Endothelial cell of umbilical vein (primary cell): ENCODE measurements at regions of chr13 and their contacts with region 1.

Region 1: GRCh38 chr13:107450931-107451330 is 764.4 kb downstream of the LIG4 start:
- DNase-seq: peak; percentile 99
- H3K4me3 ChIP-seq: no peak overlapping the region
- H3K27ac ChIP-seq: peak overlapping the region; percentile 99
- H3K4me1 ChIP-seq: peaks cover 23% of the 10 kb centered on the region
- H3K27me3 ChIP-seq: no peaks in the 10 kb centered on the region
- CTCF ChIP-seq: peak in 1 of 2 donors; percentile 12
- POLR2A ChIP-seq: peak; percentile 74

Region 2: GRCh38 chr13:106567474-106568298 is 883.2 kb before region 1 on chr13 and contains the start of gene ARGLU1:
- CTCF ChIA-PET with region 1: no interaction called
- POLR2A ChIA-PET with region 1: no interaction called
- dilution Hi-C with region 1: no loop called
- intact Hi-C with region 1: loop called (anchors 10 kb)
- DNase-seq: peak; percentile 96
- H3K4me3 ChIP-seq: peak within 1 kb of the TSS; percentile 57 to 98 (median 79)
- H3K27ac ChIP-seq: peak within 1 kb of the TSS; percentile 85
- H3K4me1 ChIP-seq: peaks cover 26% of the 10 kb centered on the region
- H3K27me3 ChIP-seq: no peaks in the 10 kb centered on the region
- CTCF ChIP-seq: no peak
- POLR2A ChIP-seq: peak; percentile 92
- total RNA-seq, gene ARGLU1: 95.7 and 111 TPM in 2 replicates

Region 3: GRCh38 chr13:107271227-107271626 is 179.7 kb before region 1 on chr13:
- CTCF ChIA-PET with region 1: no interaction called
- POLR2A ChIA-PET with region 1: no interaction called
- dilution Hi-C with region 1: no loop called
- intact Hi-C with region 1: loop called (anchors 2 kb)
- DNase-seq: peak; percentile 90
- H3K4me3 ChIP-seq: no peak overlapping the region
- H3K27ac ChIP-seq: peak overlapping the region; percentile 39
- H3K4me1 ChIP-seq: peaks cover 14% of the 10 kb centered on the region
- H3K27me3 ChIP-seq: no peaks in the 10 kb centered on the region
- CTCF ChIP-seq: no peak
- POLR2A ChIP-seq: no peak

Region 4: GRCh38 chr13:107407074-107407473 is 43.9 kb before region 1 on chr13:
- CTCF ChIA-PET with region 1: no interaction called
- POLR2A ChIA-PET with region 1: no interaction called
- dilution Hi-C with region 1: no loop called
- intact Hi-C with region 1: loop called (anchors 1 kb)
- DNase-seq: peak; percentile 74
- H3K4me3 ChIP-seq: no peak overlapping the region
- H3K27ac ChIP-seq: peak overlapping the region; percentile 65
- H3K4me1 ChIP-seq: peaks cover 12% of the 10 kb centered on the region
- H3K27me3 ChIP-seq: no peaks in the 10 kb centered on the region
- CTCF ChIP-seq: no peak
- POLR2A ChIP-seq: no peak

Region 5: GRCh38 chr13:107585469-107586180 is 134.7 kb after region 1 on chr13:
- CTCF ChIA-PET with region 1: no interaction called
- POLR2A ChIA-PET with region 1: no interaction called
- dilution Hi-C with region 1: no loop called
- intact Hi-C with region 1: loop called (anchors 1 kb)
- DNase-seq: peak; percentile 78
- H3K4me3 ChIP-seq: no peak overlapping the region
- H3K27ac ChIP-seq: no peak overlapping the region
- H3K4me1 ChIP-seq: peaks cover 13% of the 10 kb centered on the region
- H3K27me3 ChIP-seq: no peaks in the 10 kb centered on the region
- CTCF ChIP-seq: no peak
- POLR2A ChIP-seq: no peak

Region 6: DNA sequence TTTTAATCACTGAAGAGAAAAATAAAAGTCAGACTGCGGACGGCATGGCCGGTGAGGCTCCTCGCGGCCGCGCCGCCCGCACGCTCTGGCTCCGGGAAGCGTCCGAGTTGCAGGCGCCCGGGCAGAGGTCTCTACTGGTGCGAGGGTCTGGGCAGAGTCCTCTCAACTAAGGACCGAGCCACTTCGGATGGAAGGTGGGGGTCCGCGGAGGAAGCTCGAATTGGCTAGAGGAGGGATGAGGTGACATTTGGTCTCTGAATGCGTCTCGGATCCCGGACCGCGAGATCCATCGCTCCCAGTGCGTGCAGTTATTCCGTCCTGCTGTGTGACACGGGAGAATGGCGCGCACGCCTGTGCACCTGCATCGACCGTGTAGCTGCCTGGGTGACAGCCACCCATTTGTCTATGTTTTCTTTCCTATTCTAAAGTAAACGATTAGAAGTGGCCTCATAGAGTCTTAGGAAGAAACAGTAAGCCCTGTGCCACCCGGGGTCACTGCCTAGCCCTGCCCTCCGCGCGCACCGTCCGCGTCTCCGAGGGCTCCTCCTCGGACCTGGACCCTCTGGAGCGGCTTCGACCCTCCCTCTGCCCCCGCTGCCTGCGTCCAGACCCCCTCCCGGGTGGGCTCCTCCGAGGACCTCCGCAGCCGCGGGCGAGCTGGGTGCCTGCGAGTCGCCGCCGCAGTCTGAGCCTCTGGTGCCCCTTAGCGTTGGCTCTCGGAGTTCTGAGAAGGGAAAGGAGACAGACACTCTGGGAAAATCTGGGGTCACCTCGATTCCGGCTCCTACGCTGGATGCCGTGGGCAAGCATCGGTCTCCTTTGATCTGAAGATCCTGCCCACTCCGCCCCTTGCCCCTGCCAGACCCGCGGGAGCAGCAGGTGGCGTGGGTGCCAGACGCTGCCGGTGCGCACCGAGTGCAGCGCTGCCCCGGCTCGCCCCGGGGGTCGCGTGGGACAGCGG is 417.1 kb after region 1 on chr13:
- CTCF ChIA-PET with region 1: no interaction called
- POLR2A ChIA-PET with region 1: no interaction called
- dilution Hi-C with region 1: no loop called
- intact Hi-C with region 1: loop called (anchors 2 kb)
- DNase-seq: peak; percentile 64
- H3K4me3 ChIP-seq: peak overlapping the region; percentile 51 to 82 (median 54)
- H3K27ac ChIP-seq: peak overlapping the region; percentile 56
- H3K4me1 ChIP-seq: peaks cover 15% of the 10 kb centered on the region
- H3K27me3 ChIP-seq: peaks cover 5 to 8% of the 10 kb centered on the region in 2 experiments
- CTCF ChIP-seq: peak; percentile 52 to 77
- POLR2A ChIP-seq: no peak